CD8-positive, alpha-beta T cell (primary cell): ENCODE measurements at regions of chr4 and their contacts with region 1.

Region 1: GRCh38 chr4:167014944-167015343 is 219.3 kb downstream of the SPOCK3 start:
- DNase-seq: no peak
- ATAC-seq: no peak
- H3K4me3 ChIP-seq: no peak overlapping the region
- H3K4me3 Mint-ChIP-seq: no peak overlapping the region
- H3K27ac ChIP-seq: no peak overlapping the region
- H3K27ac Mint-ChIP-seq: no peak overlapping the region
- H3K4me1 ChIP-seq: no peaks in the 10 kb centered on the region
- H3K4me1 Mint-ChIP-seq: no peaks in the 10 kb centered on the region
- H3K27me3 ChIP-seq: no peaks in the 10 kb centered on the region
- H3K27me3 Mint-ChIP-seq: no peaks in the 10 kb centered on the region
- CTCF ChIP-seq: no peak

Region 2: DNA sequence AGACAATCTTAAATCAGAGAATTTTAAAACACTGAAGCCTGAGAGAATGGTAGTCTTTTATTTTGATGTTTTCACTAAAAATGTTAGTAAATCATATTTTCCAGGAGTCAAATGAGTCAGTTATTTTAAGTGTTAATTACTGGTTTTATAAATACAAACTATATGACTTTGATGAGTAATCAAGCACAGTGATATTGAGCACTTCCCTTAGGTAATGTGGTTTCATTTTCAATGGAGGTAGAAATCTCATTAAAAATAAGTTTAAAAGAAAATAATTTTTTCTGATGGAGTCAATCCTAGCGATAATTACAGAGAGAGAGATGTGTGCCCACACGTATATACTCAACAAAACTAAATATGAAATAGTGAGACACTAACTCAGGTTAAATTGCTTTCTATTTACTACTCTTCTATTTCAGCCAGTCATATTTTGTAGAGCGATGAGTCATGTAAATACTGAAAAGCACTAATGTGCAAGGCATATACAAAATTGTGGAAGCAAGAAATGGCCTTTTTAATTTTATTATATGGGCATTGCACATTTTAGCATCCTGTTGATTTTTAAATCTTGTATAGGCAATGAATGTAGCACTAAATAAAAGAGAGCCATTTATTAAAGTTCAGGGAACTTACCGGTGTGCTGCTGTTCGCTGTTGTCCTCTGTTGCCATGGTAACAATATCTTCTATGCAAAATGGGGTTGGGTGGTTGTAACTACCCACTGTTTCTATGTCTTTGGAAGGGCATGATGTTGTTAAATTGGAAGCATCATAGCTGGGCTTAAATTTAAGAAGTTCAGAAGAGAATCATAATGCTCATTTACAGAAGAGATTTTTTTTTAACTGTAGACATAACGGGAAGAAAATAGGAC is 628.2 kb before region 1 on chr4:
- CTCF ChIA-PET with region 1: no interaction called
- POLR2A ChIA-PET with region 1: no interaction called
- intact Hi-C with region 1: no loop called
- DNase-seq: no peak
- ATAC-seq: no peak
- H3K4me3 ChIP-seq: no peak overlapping the region
- H3K4me3 Mint-ChIP-seq: no peak overlapping the region
- H3K27ac ChIP-seq: no peak overlapping the region
- H3K27ac Mint-ChIP-seq: no peak overlapping the region
- H3K4me1 ChIP-seq: no peaks in the 10 kb centered on the region
- H3K4me1 Mint-ChIP-seq: no peaks in the 10 kb centered on the region
- H3K27me3 ChIP-seq: no peaks in the 10 kb centered on the region
- H3K27me3 Mint-ChIP-seq: no peaks in the 10 kb centered on the region
- CTCF ChIP-seq: no peak

Region 3: DNA sequence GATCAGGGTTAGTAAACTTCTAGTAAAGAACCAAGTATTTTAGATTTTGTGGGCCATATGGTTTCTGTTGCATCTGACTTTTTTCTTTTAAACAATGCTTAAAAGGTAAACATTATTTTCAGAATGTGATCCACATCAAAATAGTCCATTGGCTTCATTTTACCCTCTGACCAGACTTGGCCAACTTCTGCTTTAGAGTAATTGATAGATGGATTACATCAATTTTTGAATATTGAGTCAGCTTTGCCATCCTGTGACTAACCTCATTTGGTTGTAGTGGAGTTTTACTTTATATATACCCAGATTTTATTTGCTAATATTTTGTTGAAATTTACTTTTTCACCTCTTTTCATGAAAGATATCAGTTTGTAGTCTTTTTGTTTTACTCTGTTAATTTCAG is 582.1 kb before region 1 on chr4:
- CTCF ChIA-PET with region 1: no interaction called
- POLR2A ChIA-PET with region 1: no interaction called
- intact Hi-C with region 1: no loop called
- DNase-seq: no peak
- ATAC-seq: no peak
- H3K4me3 ChIP-seq: no peak overlapping the region
- H3K4me3 Mint-ChIP-seq: no peak overlapping the region
- H3K27ac ChIP-seq: no peak overlapping the region
- H3K27ac Mint-ChIP-seq: no peak overlapping the region
- H3K4me1 ChIP-seq: no peaks in the 10 kb centered on the region
- H3K4me1 Mint-ChIP-seq: no peaks in the 10 kb centered on the region
- H3K27me3 ChIP-seq: no peaks in the 10 kb centered on the region
- H3K27me3 Mint-ChIP-seq: no peaks in the 10 kb centered on the region
- CTCF ChIP-seq: no peak

Region 4: GRCh38 chr4:166501941-166502382 is 513.0 kb before region 1 on chr4:
- CTCF ChIA-PET with region 1: no interaction called
- POLR2A ChIA-PET with region 1: no interaction called
- intact Hi-C with region 1: no loop called
- DNase-seq: no peak
- ATAC-seq: no peak
- H3K4me3 ChIP-seq: no peak overlapping the region
- H3K4me3 Mint-ChIP-seq: no peak overlapping the region
- H3K27ac ChIP-seq: no peak overlapping the region
- H3K27ac Mint-ChIP-seq: no peak overlapping the region
- H3K4me1 ChIP-seq: no peaks in the 10 kb centered on the region
- H3K4me1 Mint-ChIP-seq: no peaks in the 10 kb centered on the region
- H3K27me3 ChIP-seq: no peaks in the 10 kb centered on the region
- H3K27me3 Mint-ChIP-seq: no peaks in the 10 kb centered on the region
- CTCF ChIP-seq: no peak

Region 5: DNA sequence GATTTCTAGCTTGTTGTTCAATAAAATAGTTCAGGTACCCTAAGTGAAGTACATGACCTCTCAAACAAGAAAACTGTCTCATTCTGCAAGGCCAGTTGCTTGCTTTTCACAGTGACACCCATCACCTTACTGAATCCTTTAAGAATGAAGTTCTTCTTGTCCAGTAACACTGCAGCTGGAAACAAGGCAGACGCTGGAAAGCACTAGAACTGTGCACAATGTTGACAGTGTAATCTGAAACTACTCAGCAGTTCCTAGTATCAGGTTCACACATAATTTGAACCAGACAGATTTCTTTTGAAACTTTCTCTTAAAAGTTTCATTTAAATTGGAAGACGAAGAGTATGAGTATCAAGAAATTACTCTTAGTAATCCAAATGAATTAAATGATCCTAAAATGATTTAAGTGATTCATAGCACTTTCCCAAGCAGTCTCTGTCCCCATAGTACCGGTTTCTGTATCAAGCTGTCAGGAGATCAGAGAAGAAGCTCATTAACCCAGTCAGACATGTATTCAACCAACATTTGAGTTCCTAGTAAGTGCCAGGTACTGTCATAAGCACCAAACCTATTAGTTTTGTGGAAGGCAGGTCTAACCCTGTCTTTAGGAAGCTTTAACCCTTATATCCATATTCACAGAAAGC is 1545.4 kb after region 1 on chr4:
- CTCF ChIA-PET with region 1: no interaction called
- POLR2A ChIA-PET with region 1: no interaction called
- intact Hi-C with region 1: loop called in 1 of 2 experiments (anchors 5 kb)
- DNase-seq: no peak
- ATAC-seq: no peak
- H3K4me3 ChIP-seq: no peak overlapping the region
- H3K4me3 Mint-ChIP-seq: no peak overlapping the region
- H3K27ac ChIP-seq: no peak overlapping the region
- H3K27ac Mint-ChIP-seq: no peak overlapping the region
- H3K4me1 ChIP-seq: no peaks in the 10 kb centered on the region
- H3K4me1 Mint-ChIP-seq: no peaks in the 10 kb centered on the region
- H3K27me3 ChIP-seq: no peaks in the 10 kb centered on the region
- H3K27me3 Mint-ChIP-seq: peaks cover 13% of the 10 kb centered on the region
- CTCF ChIP-seq: no peak